MCF 10A (cell line): ENCODE measurements at regions of chr11 and their contacts with region 1.

Region 1: DNA sequence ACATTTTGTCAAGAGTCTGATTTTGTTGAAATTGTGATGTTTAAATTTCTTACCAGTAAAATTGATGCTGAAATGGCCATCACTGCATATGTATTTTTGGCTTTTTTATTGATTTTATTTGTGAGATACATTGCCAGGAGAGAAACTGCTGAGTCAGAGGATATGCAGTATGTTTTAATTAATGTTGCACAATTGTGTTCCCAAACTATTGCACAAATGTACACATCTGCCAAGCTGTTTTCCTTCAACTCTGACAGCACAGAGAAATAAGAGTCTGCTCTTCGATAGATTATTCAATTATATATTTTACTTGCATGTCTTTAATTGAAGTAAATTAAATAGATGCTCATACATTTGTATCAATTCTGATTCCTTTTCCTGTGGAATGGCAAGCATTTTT is 640.2 kb upstream of the LUZP2 start:
- DNase-seq: peak; percentile 66
- H3K4me3 Mint-ChIP-seq: no peak overlapping the region
- H3K27ac Mint-ChIP-seq: no peak overlapping the region
- H3K4me1 Mint-ChIP-seq: peaks cover 6% of the 10 kb centered on the region
- H3K27me3 Mint-ChIP-seq: no peaks in the 10 kb centered on the region
- CTCF ChIP-seq: no peak

Region 2: GRCh38 chr11:23897453-23898286 is 41.0 kb after region 1 on chr11:
- CTCF ChIA-PET with region 1: no interaction called
- POLR2A ChIA-PET with region 1: no interaction called
- intact Hi-C with region 1: loop called (anchors 5 kb)
- DNase-seq: peak; percentile 56
- H3K4me3 Mint-ChIP-seq: peak overlapping the region; percentile 49
- H3K27ac Mint-ChIP-seq: peak overlapping the region; percentile 68
- H3K4me1 Mint-ChIP-seq: peaks cover 30% of the 10 kb centered on the region
- H3K27me3 Mint-ChIP-seq: no peaks in the 10 kb centered on the region
- CTCF ChIP-seq: no peak

Region 3: GRCh38 chr11:23988381-23989006 is 131.8 kb after region 1 on chr11:
- CTCF ChIA-PET with region 1: no interaction called
- POLR2A ChIA-PET with region 1: no interaction called
- intact Hi-C with region 1: loop called (anchors 5 kb)
- DNase-seq: no peak
- H3K4me3 Mint-ChIP-seq: no peak overlapping the region
- H3K27ac Mint-ChIP-seq: no peak overlapping the region
- H3K4me1 Mint-ChIP-seq: peaks cover 20% of the 10 kb centered on the region
- H3K27me3 Mint-ChIP-seq: no peaks in the 10 kb centered on the region
- CTCF ChIP-seq: no peak